ENCODE measurements at regions of chr18 and their contacts with region 1.

Region 1: DNA sequence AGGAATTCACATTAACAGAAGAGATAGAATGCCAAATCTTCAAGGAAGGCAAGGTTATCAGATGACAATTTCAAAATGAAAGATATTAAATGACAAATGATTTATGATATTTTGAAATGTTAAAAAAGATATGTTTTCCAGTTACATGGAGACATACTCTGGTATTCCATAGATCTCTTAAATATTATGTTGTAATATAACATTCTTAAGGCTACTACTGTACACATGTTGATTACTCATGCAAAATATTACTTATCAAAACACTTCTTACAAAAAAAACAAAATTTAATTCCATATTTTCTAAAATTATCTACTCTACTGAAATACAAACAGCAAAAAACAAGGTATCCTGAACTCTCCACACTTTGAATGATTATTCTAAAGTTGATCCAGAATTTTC is 22.9 kb downstream of the RTTN start:
- DNase-seq: no peak
- H3K4me3 Mint-ChIP-seq: no peak overlapping the region
- H3K27ac Mint-ChIP-seq: no peak overlapping the region
- H3K4me1 Mint-ChIP-seq: peaks cover 15% of the 10 kb centered on the region
- H3K27me3 Mint-ChIP-seq: no peaks in the 10 kb centered on the region

Region 2: DNA sequence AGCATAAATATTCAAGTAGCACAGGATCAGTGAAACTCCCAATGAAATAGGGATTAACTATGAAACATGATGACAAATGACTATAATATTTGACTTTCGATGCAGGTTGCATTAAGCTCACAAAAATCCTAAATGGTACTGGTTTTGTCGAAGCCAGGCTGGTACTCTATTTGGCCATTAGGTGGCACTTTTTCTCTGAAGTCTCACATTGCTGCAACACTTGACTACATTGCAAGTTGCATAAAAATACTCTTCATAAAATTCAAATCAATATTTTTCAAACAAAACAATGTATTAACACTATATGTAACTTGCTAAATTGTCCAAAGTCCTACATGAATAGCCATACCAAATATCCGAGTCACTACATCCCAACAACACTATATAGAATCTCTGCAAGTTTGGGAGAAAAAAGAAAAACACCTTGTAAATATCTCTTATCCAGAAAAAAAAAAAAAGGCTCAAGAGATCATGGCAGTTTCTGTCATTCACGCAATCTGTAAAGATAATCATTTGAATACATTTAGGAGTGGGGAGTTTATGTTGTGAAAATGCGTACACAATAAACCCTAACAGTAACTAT is 13.4 kb after region 1 on chr18:
- CTCF ChIA-PET with region 1: interaction called, 10 read pairs
- POLR2A ChIA-PET with region 1: no interaction called
- DNase-seq: peak; percentile 33
- H3K4me3 Mint-ChIP-seq: no peak overlapping the region
- H3K27ac Mint-ChIP-seq: no peak overlapping the region
- H3K4me1 Mint-ChIP-seq: peaks cover 16% of the 10 kb centered on the region
- H3K27me3 Mint-ChIP-seq: no peaks in the 10 kb centered on the region

Region 3: DNA sequence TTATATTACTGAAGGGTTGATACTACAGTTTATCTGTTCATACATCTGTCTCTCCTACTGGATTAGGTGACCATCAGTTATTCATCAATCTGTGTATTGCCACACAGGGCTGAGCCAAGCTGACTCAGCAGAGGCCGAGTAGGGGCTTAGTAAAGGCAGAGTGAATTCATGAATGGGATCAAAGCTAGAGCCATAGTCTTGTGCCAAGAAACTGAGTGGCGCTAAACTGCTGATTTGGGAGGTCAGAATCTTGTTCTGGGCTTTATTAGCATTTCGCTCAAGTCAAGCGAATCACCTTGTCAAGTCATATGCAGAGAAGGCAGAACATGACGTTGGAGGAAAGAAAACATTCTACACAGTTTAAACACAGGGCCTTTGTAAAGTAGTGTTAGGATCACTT is 140.4 kb after region 1 on chr18:
- CTCF ChIA-PET with region 1: no interaction called
- POLR2A ChIA-PET with region 1: no interaction called
- DNase-seq: no peak
- H3K4me3 Mint-ChIP-seq: no peak overlapping the region
- H3K27ac Mint-ChIP-seq: no peak overlapping the region
- H3K4me1 Mint-ChIP-seq: no peaks in the 10 kb centered on the region
- H3K27me3 Mint-ChIP-seq: no peaks in the 10 kb centered on the region

Measured in activated CD4-positive, alpha-beta T cell treated with anti-CD3 and anti-CD28 coated beads, Interleukin-2, amount 10 ng/mL, durations not matched to agents 7 days and 5 days (primary cell).